GM23248 (cell line): ENCODE measurements at regions of chr2 and their contacts with region 1.

Region 1: DNA sequence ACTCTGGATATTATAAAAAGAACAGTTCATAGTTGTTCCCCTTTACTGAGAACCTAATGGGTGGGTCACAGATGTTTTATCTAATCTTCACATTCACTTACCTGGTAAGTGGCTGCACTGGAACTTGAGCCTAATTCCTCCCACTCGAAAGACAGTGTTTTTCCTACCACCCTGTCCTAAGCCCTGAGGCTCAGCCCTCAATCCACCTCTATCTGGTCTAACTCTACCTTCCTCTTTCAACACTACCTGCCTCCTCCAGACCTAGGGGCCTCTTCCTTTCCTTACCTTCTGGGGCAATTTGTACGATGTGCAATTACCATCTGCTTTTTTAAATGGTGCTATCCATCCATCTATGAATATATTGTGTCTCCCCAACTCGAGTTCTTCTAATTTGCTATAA is 9.7 kb upstream of the KIF3C start:
- DNase-seq: no peak
- H3K4me3 ChIP-seq: peak overlapping the region; percentile 52
- H3K27ac ChIP-seq: no peak overlapping the region
- H3K4me1 ChIP-seq: peaks cover 5% of the 10 kb centered on the region
- H3K27me3 ChIP-seq: no peaks in the 10 kb centered on the region

Region 2: DNA sequence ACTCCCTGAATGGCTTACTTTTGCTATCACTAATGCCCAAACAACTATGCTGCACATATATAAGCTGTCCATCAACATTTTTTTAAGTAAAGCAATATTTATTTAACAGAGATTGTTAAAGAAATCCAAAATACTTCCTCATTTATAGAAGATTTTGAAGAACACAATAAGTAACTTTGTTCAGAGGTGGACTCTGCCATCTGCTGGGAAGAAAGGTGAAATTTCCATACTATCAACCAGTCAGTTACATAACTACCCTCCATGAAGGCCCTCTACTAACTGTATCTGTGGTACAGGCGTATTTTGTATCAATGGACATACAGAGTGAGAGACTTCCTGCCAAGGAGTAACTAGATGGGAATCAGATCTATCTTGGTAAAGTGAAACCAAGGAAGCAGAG is 424.6 kb before region 1 on chr2:
- in situ Hi-C with region 1: no loop called
- DNase-seq: peak; percentile 67
- H3K4me3 ChIP-seq: no peak overlapping the region
- H3K27ac ChIP-seq: no peak overlapping the region
- H3K4me1 ChIP-seq: no peaks in the 10 kb centered on the region
- H3K27me3 ChIP-seq: no peaks in the 10 kb centered on the region; the same call in 1 of the 2 replicates

Region 3: GRCh38 chr2:26144953-26145680 is 153.2 kb after region 1 on chr2:
- in situ Hi-C with region 1: loop called (anchors 5 kb)
- DNase-seq: peak; percentile 68
- H3K4me3 ChIP-seq: peak overlapping the region; percentile 44
- H3K27ac ChIP-seq: no peak overlapping the region
- H3K4me1 ChIP-seq: no peaks in the 10 kb centered on the region
- H3K27me3 ChIP-seq: no peaks in the 10 kb centered on the region

Region 4: GRCh38 chr2:26503231-26503880 is 511.4 kb after region 1 on chr2:
- in situ Hi-C with region 1: no loop called
- DNase-seq: peak; percentile 84
- H3K4me3 ChIP-seq: peak overlapping the region; percentile 69
- H3K27ac ChIP-seq: no peak overlapping the region
- H3K4me1 ChIP-seq: no peaks in the 10 kb centered on the region
- H3K27me3 ChIP-seq: peaks cover 32% of the 10 kb centered on the region

Region 5: GRCh38 chr2:26988058-26988860 is 996.3 kb after region 1 on chr2:
- in situ Hi-C with region 1: no loop called
- DNase-seq: peak; percentile 85
- H3K4me3 ChIP-seq: no peak overlapping the region
- H3K27ac ChIP-seq: peak overlapping the region; percentile 21
- H3K4me1 ChIP-seq: peaks cover 19% of the 10 kb centered on the region
- H3K27me3 ChIP-seq: no peaks in the 10 kb centered on the region